Right ventricle myocardium superior (tissue), 1 donor: ENCODE measurements at regions of chr15 and their contacts with region 1.

Region 1: GRCh38 chr15:70670680-70671079 is 92.7 kb downstream of the UACA start:
- DNase-seq: no peak
- ATAC-seq: no peak

Region 2: DNA sequence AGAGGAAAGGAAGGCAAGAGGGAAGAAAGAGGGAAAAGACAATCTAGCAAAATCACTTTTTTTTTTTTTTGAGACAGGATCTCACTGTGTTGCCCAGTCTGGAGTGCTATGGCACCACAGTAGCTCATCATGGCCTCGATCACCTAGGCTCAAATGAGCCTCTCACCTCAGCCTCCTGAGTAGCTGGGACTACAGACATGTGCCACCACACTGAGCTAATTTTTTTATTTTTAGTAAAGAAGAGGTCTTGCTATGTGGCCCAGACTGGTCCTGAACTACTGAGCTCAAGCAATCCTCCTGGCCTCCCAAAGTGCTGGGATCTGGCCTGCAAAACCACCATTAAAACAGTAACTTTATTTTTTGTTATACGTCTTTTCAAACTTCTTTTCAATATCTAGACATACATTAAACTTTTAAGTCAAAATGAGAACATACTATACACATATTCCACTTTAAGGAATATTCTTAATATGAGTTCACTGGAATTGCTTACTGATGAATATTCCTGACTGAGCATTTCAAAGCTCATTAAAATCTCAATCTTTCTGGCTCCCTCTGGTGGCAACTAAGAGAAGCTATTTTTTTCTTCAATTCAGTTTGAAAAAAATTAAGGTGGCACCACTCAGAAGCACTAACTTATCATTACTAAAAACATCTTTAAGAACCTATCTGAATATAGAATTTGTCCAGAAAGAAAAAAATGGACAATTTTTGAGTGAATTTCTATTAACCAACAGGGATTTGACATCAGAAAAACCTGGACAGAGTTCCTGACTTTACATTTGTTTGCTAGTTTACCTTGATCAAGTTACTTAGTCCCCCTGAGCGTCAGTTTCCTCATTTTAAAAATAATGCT is 51.8 kb after region 1 on chr15:
- intact Hi-C with region 1: loop called (anchors 10 kb)
- DNase-seq: no peak
- ATAC-seq: peak; percentile 40